Breast epithelium (tissue), 4 donors: ENCODE measurements at regions of chr5 and their contacts with region 1.

Region 1: GRCh38 chr5:67765697-67766096 is 449.9 kb upstream of the PIK3R1 start:
- DNase-seq: peak in 1 of 2 donors; percentile 39
- H3K4me3 ChIP-seq: no peak overlapping the region
- H3K27ac ChIP-seq: no peak overlapping the region
- H3K4me1 ChIP-seq: no peaks in the 10 kb centered on the region
- H3K27me3 ChIP-seq: no peaks in the 10 kb centered on the region
- CTCF ChIP-seq: no peak
- POLR2A ChIP-seq: no peak

Region 2: DNA sequence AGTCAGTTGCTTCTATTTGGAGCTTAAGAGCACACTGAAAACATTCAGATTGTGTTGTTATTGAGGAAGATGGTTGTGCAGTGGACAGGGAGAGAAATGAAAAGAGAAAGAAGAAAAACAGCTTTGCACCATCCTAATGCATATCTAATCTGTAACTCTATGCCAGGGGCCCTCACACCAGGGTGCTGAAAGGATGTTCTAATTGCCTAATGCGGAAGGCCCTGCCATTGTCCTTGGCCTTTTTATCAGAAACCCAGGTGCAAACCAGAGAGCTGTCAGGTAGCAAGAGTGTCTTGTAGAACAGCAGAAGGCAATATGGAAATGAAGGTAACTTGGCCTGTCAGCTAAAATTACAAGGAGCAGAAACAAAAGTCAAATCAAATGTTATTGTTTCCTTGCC is 65.4 kb after region 1 on chr5:
- intact Hi-C with region 1: no loop called
- DNase-seq: no peak
- H3K4me3 ChIP-seq: no peak overlapping the region
- H3K27ac ChIP-seq: no peak overlapping the region
- H3K4me1 ChIP-seq: no peaks in the 10 kb centered on the region
- H3K27me3 ChIP-seq: no peaks in the 10 kb centered on the region
- CTCF ChIP-seq: no peak
- POLR2A ChIP-seq: no peak

Region 3: GRCh38 chr5:69099302-69099701 is 1333.6 kb after region 1 on chr5:
- intact Hi-C with region 1: loop called (anchors 5 kb)
- DNase-seq: no peak
- H3K4me3 ChIP-seq: no peak overlapping the region
- H3K27ac ChIP-seq: no peak overlapping the region
- H3K4me1 ChIP-seq: peaks cover 0 to 4% of the 10 kb centered on the region in 2 donors
- H3K27me3 ChIP-seq: no peaks in the 10 kb centered on the region
- CTCF ChIP-seq: no peak
- POLR2A ChIP-seq: no peak